IMR-90 (cell line): ENCODE measurements at regions of chr17 and their contacts with region 1.

Region 1: DNA sequence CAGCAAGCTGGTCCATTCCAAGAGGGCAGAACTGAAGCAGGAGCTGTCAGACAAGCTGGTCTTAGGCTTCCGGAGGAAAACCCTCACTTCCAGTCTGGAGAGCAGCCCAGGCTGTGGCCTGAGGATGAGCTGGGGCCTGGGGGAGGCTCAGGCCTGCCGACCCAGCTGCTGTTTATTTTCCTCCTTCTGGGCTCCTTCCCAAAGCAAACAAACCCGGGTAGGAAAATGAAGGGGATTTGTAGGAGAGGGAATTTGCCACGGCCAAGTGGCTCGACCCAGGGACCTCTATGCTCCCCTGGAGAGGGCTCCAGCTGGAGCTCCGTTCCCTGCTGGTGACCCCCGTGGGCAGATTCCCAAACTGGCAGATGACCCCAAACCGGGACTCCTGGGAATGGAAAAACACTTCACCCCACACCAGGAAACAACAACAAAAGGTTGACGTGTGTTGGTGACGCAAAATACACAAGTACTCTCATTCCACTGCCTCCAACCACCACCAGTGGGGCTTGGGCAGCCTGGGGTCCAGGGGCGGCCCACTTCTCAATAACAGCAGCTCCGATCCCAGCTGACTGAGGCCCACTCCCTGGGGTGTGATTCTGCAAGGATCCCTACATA is 8.8 kb downstream of the JUP start:
- DNase-seq: peak; percentile 96
- ATAC-seq: peak; percentile 83
- H3K4me3 ChIP-seq: no peak overlapping the region
- H3K27ac ChIP-seq: peak overlapping the region; percentile 82
- H3K4me1 ChIP-seq: peaks cover 34% of the 10 kb centered on the region
- H3K27me3 ChIP-seq: no peaks in the 10 kb centered on the region
- CTCF ChIP-seq: no peak
- POLR2A ChIP-seq: peak; percentile 49; the same call in 1 of the 2 replicates
- RAD21 ChIP-seq: peak; percentile 12; the same call in 1 of the 2 replicates

Region 2: DNA sequence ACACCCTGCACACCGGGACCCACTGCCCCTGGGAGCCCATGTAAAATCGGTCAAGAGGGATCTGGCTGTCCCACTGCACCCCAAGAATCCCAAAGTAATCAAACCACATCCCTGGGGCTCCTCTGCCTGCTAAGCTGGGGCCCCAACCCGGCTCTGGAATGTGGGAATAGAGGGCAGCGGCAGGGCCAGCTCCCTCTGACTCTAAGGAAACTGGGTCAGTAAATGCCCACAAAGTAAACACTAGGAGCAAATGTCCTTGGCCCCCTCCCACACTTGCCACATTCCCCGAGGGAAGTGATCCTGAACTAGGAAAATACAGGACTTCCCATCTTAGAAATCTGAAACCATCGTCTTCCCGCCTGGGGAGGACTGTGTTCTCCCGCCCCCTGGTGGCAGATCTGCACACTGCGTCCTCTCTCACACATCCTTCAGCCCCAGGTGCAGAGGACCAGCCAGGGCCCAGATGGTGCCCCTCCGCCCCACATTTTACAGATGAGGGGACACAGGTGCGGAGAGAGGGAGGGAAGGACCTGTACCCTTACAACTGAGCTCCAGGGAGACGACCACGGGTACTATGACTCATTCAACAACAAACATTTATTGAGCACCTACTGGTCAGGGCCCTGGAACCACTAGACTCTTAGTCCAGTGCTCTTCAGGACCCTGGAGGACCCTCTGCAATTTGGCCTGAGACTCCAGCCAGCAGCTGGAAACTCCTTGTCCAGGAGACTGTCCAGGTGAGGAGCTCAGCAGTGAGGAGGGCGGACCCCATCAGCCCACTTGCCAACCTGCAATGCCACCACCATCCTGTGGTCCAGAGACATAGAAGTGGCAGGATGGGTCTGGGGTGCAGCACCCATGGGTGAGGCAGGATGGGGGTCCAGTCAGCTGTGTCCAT is 23.9 kb after region 1 on chr17:
- CTCF ChIA-PET with region 1: interaction called, 7 read pairs
- POLR2A ChIA-PET with region 1: interaction called, 3 read pairs
- dilution Hi-C with region 1: no loop called
- in situ Hi-C with region 1: no loop called
- intact Hi-C with region 1: loop called (anchors 1 kb)
- DNase-seq: peak; percentile 72
- ATAC-seq: peak; percentile 93
- H3K4me3 ChIP-seq: no peak overlapping the region
- H3K27ac ChIP-seq: no peak overlapping the region
- H3K4me1 ChIP-seq: peaks cover 11% of the 10 kb centered on the region
- H3K27me3 ChIP-seq: no peaks in the 10 kb centered on the region
- CTCF ChIP-seq: peak; percentile 96
- POLR2A ChIP-seq: peak; percentile 41; the same call in 1 of the 2 replicates
- RAD21 ChIP-seq: peak; percentile 97